Esophagus muscularis mucosa (tissue), 4 donors: ENCODE measurements at regions of chr11 and their contacts with region 1.

Region 1: GRCh38 chr11:114209904-114210303 is 86.3 kb upstream of the NNMT start:
- DNase-seq: no peak
- H3K4me3 ChIP-seq: no peak overlapping the region
- H3K27ac ChIP-seq: peak overlapping the region in 1 of 4 donors; percentile 5
- H3K4me1 ChIP-seq: peaks cover 54 to 90% (median 81%) of the 10 kb centered on the region in 4 donors
- H3K27me3 ChIP-seq: no peaks in the 10 kb centered on the region
- CTCF ChIP-seq: no peak
- EP300 ChIP-seq: no peak
- POLR2A ChIP-seq: no peak

Region 2: DNA sequence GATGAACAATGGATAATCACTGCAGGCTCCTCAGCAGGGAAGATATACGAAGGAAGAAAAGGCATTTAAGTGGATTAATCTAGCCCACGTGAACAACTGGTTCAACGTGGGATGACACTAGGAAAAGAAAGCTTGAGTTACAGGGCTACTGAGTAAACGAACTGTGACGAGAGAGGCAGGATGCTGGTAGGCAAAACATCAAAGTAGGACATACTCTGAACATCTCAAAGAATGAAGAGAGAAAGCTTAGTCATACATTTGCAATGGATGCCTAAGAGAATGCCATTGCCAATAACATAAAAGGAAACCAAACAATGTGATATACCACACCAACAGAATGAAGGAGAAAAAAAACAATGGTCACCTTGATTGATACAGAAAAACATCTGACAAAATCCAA is 347.5 kb before region 1 on chr11:
- intact Hi-C with region 1: no loop called
- DNase-seq: no peak
- H3K4me3 ChIP-seq: no peak overlapping the region
- H3K27ac ChIP-seq: no peak overlapping the region
- H3K4me1 ChIP-seq: peaks cover 0 to 9% (median 2%) of the 10 kb centered on the region in 4 donors
- H3K27me3 ChIP-seq: no peaks in the 10 kb centered on the region
- CTCF ChIP-seq: no peak
- EP300 ChIP-seq: no peak
- POLR2A ChIP-seq: no peak

Region 3: GRCh38 chr11:114244726-114245394 is 35.0 kb after region 1 on chr11:
- intact Hi-C with region 1: loop called (anchors 5 kb)
- DNase-seq: no peak
- H3K4me3 ChIP-seq: no peak overlapping the region
- H3K27ac ChIP-seq: no peak overlapping the region
- H3K4me1 ChIP-seq: peaks cover 27 to 59% (median 43%) of the 10 kb centered on the region in 4 donors
- H3K27me3 ChIP-seq: no peaks in the 10 kb centered on the region
- CTCF ChIP-seq: no peak
- EP300 ChIP-seq: no peak
- POLR2A ChIP-seq: no peak

Region 4: GRCh38 chr11:114321621-114322257 is 111.8 kb after region 1 on chr11:
- intact Hi-C with region 1: no loop called
- DNase-seq: peak; percentile 79
- H3K4me3 ChIP-seq: no peak overlapping the region
- H3K27ac ChIP-seq: no peak overlapping the region
- H3K4me1 ChIP-seq: peaks cover 0 to 13% (median 6%) of the 10 kb centered on the region in 4 donors
- H3K27me3 ChIP-seq: peaks cover 0 to 11% (median 0%) of the 10 kb centered on the region in 4 donors
- CTCF ChIP-seq: no peak
- EP300 ChIP-seq: no peak
- POLR2A ChIP-seq: no peak

Region 5: GRCh38 chr11:114425921-114426679 is 216.2 kb after region 1 on chr11:
- intact Hi-C with region 1: no loop called
- DNase-seq: no peak
- H3K4me3 ChIP-seq: no peak overlapping the region
- H3K27ac ChIP-seq: no peak overlapping the region
- H3K4me1 ChIP-seq: no peaks in the 10 kb centered on the region
- H3K27me3 ChIP-seq: no peaks in the 10 kb centered on the region
- CTCF ChIP-seq: no peak
- EP300 ChIP-seq: no peak
- POLR2A ChIP-seq: no peak